Activated CD4-positive, alpha-beta T cell treated with anti-CD3 and anti-CD28 coated beads for 36 hours (primary cell): ENCODE measurements at regions of chr3 and their contacts with region 1.

Region 1: DNA sequence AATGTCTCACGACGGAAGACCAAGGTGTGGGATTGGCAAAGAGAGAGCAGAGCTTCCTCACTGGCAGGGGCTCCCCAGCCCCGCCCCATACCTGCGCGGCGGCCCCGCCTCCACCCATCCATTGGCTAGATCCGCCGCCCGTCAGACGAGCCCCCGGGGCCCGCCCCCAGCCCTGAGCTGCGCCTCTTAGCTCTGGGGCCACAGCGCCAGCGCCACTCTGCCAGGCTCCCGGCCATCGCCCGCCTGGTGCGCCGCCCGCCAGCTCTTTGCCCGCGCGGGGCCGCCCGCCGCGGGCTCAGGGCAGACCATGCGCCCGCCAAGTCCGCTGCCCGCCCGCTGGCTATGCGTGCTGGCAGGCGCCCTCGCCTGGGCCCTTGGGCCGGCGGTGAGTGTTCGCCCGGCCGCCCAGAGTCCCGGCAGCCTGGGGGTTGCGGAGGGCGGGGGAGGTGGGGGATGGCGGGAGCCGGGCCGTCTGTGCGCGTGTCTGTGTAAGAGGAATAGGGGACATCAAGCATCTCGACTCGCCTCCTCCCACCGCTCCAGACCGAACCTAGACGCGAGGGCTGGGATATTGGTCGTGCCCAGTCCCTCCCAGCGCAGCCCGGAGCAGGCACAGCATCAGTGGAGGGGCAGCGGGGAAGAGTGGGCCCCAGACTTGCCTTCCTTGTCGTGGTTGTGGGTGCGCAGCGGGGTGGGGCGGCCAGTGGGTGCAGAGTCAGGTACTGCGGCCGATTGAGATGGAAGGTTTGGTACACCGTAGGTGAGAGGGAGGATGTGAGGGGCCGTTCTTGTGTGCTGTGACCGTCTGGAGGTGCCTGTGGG is at the start of gene VIPR1:
- DNase-seq: peak; percentile 96
- ATAC-seq: peak; percentile 95
- H3K4me3 Mint-ChIP-seq: peak within 1 kb of the TSS; percentile 83
- H3K27ac Mint-ChIP-seq: peak within 1 kb of the TSS; percentile 71
- H3K4me1 Mint-ChIP-seq: peaks cover 46% of the 10 kb centered on the region
- H3K27me3 Mint-ChIP-seq: peaks cover 16% of the 10 kb centered on the region
- total RNA-seq, gene VIPR1: 6.6 to 6.7 TPM

Region 2: DNA sequence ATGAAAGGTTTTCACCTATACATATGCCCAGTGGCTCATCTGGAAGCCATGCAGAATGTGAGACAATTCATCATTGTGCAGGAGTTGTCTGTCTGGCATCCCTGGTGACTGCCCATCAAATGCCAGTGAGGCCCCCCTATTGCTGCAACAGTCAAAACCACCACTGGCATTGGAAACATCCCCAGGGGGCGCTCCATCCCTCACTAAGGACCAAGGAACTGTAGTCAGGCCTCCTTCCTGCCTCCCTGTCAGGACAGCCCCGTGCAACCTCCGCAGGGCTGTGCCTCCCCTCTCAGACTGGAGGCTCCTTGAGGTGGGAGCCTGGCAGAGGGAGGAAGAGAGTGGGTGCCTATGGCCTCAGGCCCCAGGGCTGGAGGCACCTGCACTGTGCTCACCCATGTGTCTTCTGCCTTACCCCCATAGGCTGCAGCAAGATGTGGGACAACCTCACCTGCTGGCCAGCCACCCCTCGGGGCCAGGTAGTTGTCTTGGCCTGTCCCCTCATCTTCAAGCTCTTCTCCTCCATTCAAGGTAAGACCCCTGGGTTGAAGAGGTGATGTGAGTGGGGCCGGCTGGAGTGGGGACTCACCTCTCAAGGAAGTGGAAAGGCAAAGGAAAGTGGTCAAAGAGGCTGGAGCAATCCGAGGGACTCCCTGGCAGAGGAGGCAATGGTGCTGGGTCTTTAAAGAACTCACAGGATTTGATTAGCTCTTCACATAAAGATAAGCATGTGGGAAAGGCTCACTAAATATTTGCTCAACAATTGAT is 16.3 kb after region 1 on chr3:
- CTCF ChIA-PET with region 1: interaction called, 16 read pairs
- POLR2A ChIA-PET with region 1: interaction called, 3 read pairs
- intact Hi-C with region 1: loop called in 1 of 2 experiments (anchors 1 kb)
- DNase-seq: peak; percentile 53
- ATAC-seq: no peak
- H3K4me3 Mint-ChIP-seq: no peak overlapping the region
- H3K27ac Mint-ChIP-seq: no peak overlapping the region
- H3K4me1 Mint-ChIP-seq: peaks cover 27% of the 10 kb centered on the region
- H3K27me3 Mint-ChIP-seq: no peaks in the 10 kb centered on the region

Region 3: DNA sequence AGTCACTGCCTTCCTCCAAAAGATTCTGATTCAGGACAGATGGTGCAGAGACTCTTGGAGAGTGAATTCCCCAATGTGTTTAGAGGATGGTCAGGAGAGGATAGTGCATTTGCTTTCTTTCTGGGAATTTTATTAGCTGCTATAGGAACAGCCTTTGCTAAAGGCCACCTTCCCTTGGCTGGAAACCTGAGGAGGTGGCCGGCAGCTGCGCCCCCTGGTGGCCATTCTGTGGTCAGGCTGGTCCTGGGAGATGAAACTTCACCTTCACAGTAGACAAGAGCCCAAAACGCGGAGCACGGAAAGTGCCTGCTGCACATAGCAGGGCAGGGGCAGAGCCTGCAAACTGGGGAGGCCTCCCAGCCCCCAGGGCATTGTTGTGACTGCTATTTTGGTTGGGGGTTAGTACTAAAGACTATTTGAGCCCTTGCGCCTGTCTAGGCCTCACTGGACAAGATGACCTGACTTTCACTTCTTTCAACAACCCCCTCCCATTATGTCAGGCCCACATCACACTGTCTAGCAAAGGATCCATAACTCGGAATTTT is 44.8 kb after region 1 on chr3:
- CTCF ChIA-PET with region 1: interaction called, 41 read pairs
- POLR2A ChIA-PET with region 1: interaction called, 4 read pairs
- intact Hi-C with region 1: no loop called
- DNase-seq: peak; percentile 80
- ATAC-seq: peak; percentile 77
- H3K4me3 Mint-ChIP-seq: no peak overlapping the region
- H3K27ac Mint-ChIP-seq: no peak overlapping the region
- H3K4me1 Mint-ChIP-seq: no peaks in the 10 kb centered on the region
- H3K27me3 Mint-ChIP-seq: no peaks in the 10 kb centered on the region

Region 4: DNA sequence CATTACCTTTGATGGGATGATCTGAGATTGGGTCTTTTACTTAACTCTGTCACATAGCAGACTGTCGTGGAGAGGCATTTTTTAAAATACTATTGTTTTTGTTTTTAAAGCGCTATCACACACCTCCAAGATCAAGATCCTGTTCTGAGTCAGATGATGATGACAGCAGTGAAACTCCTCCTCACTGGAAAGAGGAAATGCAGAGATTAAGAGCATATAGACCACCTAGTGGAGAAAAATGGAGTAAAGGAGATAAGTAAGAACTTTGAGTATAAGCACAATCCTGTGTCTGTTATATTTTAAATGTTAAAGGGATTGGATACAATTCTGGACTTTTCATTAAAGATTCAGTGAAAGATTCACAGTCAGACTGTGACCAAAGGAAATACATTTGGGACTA is 132.5 kb after region 1 on chr3:
- CTCF ChIA-PET with region 1: no interaction called
- POLR2A ChIA-PET with region 1: no interaction called
- intact Hi-C with region 1: loop called in 1 of 2 experiments (anchors 1 kb)
- DNase-seq: peak; percentile 7
- ATAC-seq: peak; percentile 52
- H3K4me3 Mint-ChIP-seq: no peak overlapping the region
- H3K27ac Mint-ChIP-seq: peak overlapping the region; percentile 56
- H3K4me1 Mint-ChIP-seq: peaks cover 13% of the 10 kb centered on the region
- H3K27me3 Mint-ChIP-seq: no peaks in the 10 kb centered on the region

Region 5: GRCh38 chr3:42804106-42804830 is 301.6 kb after region 1 on chr3 and contains the start of gene HIGD1A:
- CTCF ChIA-PET with region 1: no interaction called
- POLR2A ChIA-PET with region 1: interaction called, 4 read pairs
- intact Hi-C with region 1: loop called in 1 of 2 experiments (anchors 1 kb)
- DNase-seq: peak; percentile 97
- ATAC-seq: peak; percentile 99
- H3K4me3 Mint-ChIP-seq: peak within 1 kb of the TSS; percentile 91
- H3K27ac Mint-ChIP-seq: peak within 1 kb of the TSS; percentile 86
- H3K4me1 Mint-ChIP-seq: peaks cover 41% of the 10 kb centered on the region
- H3K27me3 Mint-ChIP-seq: peaks cover 6% of the 10 kb centered on the region
- total RNA-seq, gene HIGD1A: 74.9 to 77.8 TPM

Region 6: DNA sequence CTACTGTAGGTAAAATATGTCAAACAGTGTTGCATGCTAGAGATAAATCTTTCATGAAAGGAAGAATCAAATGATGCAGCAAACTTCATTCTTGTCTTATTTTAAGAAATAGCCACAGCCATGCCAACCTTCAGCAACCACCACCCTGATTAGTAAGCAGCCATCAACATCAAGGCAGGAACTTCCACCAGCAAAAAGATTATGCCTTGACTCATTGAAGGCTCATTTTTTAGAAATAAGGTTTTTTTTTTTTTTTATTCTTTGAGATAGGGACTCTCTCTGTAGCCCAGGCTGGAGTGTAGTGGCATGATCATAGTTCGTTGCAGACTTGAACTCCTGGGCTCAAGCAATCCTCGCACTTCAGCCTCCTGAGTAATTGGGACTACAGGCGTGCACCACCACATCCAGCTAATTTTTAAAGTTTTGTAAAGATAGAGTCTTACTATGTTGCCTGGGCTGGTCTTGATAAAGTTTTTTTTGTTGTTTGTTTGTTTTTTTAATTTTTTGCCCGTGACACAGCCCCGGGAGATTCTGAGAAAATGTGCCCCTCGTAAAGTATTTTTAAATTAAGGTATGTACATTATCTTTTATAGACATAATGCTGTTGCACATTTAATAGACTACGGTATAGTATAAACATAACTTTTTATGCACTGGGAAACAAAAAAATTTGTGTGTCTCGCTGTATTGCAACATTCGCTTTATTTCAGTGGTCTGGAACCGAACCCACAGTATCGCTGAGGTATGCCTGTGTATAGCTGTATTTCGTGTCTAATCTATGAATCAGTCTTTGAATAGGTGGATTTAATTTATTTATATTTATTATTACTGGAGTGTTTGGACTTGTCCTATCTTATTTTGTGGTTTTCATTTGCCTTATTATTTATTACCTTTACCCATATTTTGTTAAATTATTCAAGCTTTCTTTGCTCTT is 807.0 kb after region 1 on chr3:
- CTCF ChIA-PET with region 1: no interaction called
- POLR2A ChIA-PET with region 1: no interaction called
- intact Hi-C with region 1: no loop called
- DNase-seq: no peak
- ATAC-seq: no peak
- H3K4me3 Mint-ChIP-seq: no peak overlapping the region
- H3K27ac Mint-ChIP-seq: peak overlapping the region; percentile 25
- H3K4me1 Mint-ChIP-seq: peaks cover 69% of the 10 kb centered on the region
- H3K27me3 Mint-ChIP-seq: no peaks in the 10 kb centered on the region